CD4-positive, alpha-beta memory T cell (primary cell): ENCODE measurements at regions of chr6 and their contacts with region 1.

Region 1: DNA sequence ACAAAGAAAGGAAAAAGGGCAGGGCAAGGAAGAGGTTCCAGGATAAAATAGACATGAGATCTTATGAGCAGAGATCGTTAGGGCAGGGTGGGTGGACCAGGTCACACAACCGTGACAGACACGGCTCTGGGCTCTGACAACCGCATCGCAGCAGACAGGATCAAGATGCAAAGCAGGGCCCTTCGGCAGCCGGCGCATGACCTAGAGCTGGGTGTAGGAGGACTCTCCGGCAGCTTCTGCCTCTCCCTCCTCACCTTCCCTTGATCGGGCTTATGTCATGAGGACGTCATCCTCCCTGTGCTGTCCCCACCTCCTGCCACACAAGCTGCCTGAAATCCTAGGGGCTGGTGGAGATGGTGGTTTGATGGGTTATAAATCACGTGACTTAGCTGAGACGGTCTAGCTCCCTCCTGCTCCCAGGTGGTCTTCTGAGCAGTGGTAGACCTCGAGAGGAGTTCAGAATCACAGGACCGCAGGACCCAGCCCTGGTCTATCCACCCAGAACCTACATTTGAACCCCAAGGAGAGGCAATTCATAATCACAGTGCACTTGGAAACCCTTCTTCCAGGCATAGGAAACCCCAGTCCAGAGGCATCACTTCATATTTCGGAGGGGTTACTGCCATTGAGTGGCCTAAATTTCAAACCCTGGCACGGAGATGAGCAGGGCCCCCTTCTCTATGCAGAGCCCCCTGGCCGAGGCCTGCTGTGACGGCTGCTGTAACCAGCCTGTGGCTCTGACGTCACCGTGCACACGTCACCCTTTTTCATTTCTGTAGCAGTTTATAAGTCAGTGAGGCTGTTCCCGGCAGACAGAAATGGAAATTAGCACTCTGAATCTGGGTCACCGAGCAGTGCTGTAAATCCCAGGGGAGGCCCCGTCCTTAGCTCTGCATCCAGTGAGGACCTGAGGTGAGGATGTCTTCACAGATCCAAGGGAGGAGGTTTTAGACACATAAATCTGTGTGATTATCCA is 8.7 kb upstream of the CCR6 start:
- DNase-seq: peak; percentile 74 to 92 (median 84)
- H3K4me3 ChIP-seq: peak overlapping the region; percentile 64 to 87
- H3K4me3 Mint-ChIP-seq: peak overlapping the region; percentile 92 to 98 (median 95)
- H3K27ac ChIP-seq: peak overlapping the region; percentile 90
- H3K27ac Mint-ChIP-seq: peak overlapping the region; percentile 95 to 99 (median 98)
- H3K4me1 ChIP-seq: peaks cover 77% of the 10 kb centered on the region
- H3K4me1 Mint-ChIP-seq: peaks cover 63 to 90% (median 78%) of the 10 kb centered on the region in 4 donors
- H3K27me3 ChIP-seq: no peaks in the 10 kb centered on the region
- H3K27me3 Mint-ChIP-seq: peaks cover 0 to 1% of the 10 kb centered on the region in 2 donors

Region 2: GRCh38 chr6:167047554-167047953 is 66.7 kb before region 1 on chr6:
- CTCF ChIA-PET with region 1: interaction called, 3 read pairs
- POLR2A ChIA-PET with region 1: interaction called, 34 read pairs
- intact Hi-C with region 1: no loop called
- DNase-seq: peak; percentile 49 to 67 (median 64)
- H3K4me3 ChIP-seq: peak overlapping the region in 1 of 2 donors; percentile 28
- H3K4me3 Mint-ChIP-seq: peak overlapping the region; percentile 56 to 82 (median 71)
- H3K27ac ChIP-seq: peak overlapping the region; percentile 30
- H3K27ac Mint-ChIP-seq: peak overlapping the region; percentile 64 to 97 (median 85)
- H3K4me1 ChIP-seq: peaks cover 49% of the 10 kb centered on the region
- H3K4me1 Mint-ChIP-seq: peaks cover 26 to 57% (median 39%) of the 10 kb centered on the region in 4 donors
- H3K27me3 ChIP-seq: no peaks in the 10 kb centered on the region
- H3K27me3 Mint-ChIP-seq: no peaks in the 10 kb centered on the region

Region 3: GRCh38 chr6:167079853-167080297 is 34.3 kb before region 1 on chr6:
- CTCF ChIA-PET with region 1: no interaction called
- POLR2A ChIA-PET with region 1: interaction called, 3 read pairs
- intact Hi-C with region 1: loop called (anchors 5 kb)
- DNase-seq: peak; percentile 65 to 80 (median 73)
- H3K4me3 ChIP-seq: peak overlapping the region in 1 of 2 donors; percentile 21
- H3K4me3 Mint-ChIP-seq: peak overlapping the region; percentile 1 to 74 (median 62)
- H3K27ac ChIP-seq: peak overlapping the region; percentile 26
- H3K27ac Mint-ChIP-seq: peak overlapping the region in 6 of 7 donors; percentile 77 to 92 (median 84)
- H3K4me1 ChIP-seq: peaks cover 17% of the 10 kb centered on the region
- H3K4me1 Mint-ChIP-seq: peaks cover 16 to 22% (median 20%) of the 10 kb centered on the region in 4 donors
- H3K27me3 ChIP-seq: no peaks in the 10 kb centered on the region
- H3K27me3 Mint-ChIP-seq: no peaks in the 10 kb centered on the region